ENCODE measurements at regions of chr10 and their contacts with region 1.

Region 1: DNA sequence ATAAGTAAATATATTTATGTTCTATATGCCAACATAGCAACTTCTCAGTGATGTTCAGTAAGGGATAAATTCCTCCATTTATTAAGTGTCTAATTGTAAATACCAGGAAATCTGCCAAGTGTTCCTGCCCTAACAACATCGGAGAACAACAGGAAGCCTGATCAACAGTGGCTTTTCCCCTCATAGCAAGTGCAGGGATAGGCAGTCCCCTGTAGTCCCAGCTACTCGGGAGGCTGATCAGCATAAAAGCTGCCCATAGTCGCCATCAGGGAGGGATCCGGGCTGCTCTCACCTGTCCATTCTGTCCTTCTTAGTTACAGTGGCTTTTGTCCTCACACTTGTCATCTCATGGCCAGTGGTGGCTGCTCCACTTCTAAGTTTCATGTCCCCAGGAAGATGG is 141.3 kb downstream of the IDE start:
- DNase-seq: no peak
- ATAC-seq: no peak
- H3K4me3 ChIP-seq: no peak overlapping the region
- H3K27ac ChIP-seq: no peak overlapping the region
- H3K4me1 ChIP-seq: peaks cover 6 to 9% of the 10 kb centered on the region in 2 experiments; a peak in 3 of 5 replicates
- H3K27me3 ChIP-seq: no peaks in the 10 kb centered on the region
- CTCF ChIP-seq: no peak
- EP300 ChIP-seq: no peak
- POLR2A ChIP-seq: no peak
- RAD21 ChIP-seq: no peak

Region 2: DNA sequence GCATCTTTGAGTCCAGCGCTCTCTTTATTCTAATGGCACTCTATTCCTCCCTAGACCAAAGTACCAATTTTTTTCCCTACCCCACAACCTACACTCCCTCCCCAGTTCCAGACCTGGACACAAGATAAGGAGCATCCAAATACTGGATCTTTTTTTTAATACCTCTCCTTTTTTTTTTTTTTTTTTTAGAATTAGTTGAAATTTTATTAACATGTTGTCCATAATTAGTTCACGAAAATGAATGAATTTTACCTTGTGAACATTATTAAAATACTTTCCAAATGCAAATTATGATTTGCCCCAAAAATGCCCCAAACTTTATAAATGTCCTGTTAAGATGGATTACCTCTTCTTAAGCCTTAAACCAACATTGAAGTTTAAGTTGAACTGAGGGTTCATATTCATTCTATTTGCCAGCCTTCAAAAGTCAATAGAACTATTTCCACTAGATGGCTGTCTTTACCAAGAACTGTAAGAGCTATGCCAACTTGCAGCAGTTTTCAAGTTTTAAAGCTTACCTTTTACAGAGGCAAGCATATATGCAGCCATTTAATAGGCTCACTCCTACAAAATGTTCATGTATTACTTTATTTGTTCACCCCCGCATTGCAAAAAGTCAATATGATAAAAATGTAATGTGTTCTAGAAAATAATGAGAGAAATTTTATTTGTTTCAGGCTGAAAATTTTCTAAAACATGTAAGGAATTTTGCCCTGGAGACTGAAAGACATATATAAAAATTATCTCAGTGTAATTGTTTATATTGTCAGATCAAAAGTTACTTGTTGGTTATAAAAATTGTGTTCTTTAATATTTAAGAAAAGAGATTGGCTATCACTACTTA is 674.1 kb before region 1 on chr10:
- CTCF ChIA-PET with region 1: interaction called, 3 read pairs
- POLR2A ChIA-PET with region 1: no interaction called
- in situ Hi-C with region 1: loop called (anchors 25 kb)
- intact Hi-C with region 1: loop called (anchors 2 kb)
- DNase-seq: peak in 2 of 4 experiments; percentile 11 to 38
- ATAC-seq: peak; percentile 70
- H3K4me3 ChIP-seq: no peak overlapping the region
- H3K27ac ChIP-seq: no peak overlapping the region
- H3K4me1 ChIP-seq: no peaks in the 10 kb centered on the region; a peak in 1 of 5 replicates
- H3K27me3 ChIP-seq: no peaks in the 10 kb centered on the region
- CTCF ChIP-seq: peak; percentile 33 to 70 (median 41); a peak in 4 of 6 replicates
- EP300 ChIP-seq: no peak
- POLR2A ChIP-seq: no peak
- RAD21 ChIP-seq: peak; percentile 78 to 86

Region 3: DNA sequence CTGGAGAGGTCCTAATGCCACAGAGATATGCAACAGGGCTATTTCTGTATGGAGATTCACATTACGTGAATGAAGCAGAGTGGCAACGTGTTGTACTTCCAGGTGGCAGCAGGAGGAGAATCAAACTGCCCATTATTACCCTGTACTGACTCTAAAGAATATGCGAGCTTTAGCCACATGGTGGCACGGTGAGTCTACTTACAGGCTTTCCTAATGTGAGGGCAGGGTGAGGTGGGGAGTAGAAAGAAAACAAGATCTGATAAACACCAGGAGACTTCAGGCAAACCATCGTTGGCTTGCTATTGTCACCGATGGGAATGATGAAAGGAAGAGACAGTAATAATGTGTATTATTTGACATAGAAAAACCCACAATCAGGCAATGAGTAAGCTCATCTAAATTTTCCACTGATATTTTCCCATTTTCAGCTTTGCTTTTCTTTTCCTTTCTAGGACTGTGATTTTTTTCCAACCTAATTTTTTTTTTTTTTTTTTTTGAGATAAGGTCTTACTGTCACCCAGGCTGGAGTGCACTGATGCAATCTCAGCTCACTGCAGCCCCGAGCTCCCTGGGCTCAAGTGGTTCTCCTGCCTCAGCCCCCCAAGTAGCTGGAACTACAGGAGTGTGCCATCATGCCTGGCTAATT is 344.7 kb before region 1 on chr10:
- CTCF ChIA-PET with region 1: interaction called, 12 read pairs
- POLR2A ChIA-PET with region 1: no interaction called
- in situ Hi-C with region 1: loop called (anchors 5 kb)
- intact Hi-C with region 1: loop called (anchors 1 kb)
- DNase-seq: peak; percentile 37 to 73 (median 52)
- ATAC-seq: peak; percentile 100
- H3K4me3 ChIP-seq: no peak overlapping the region
- H3K27ac ChIP-seq: no peak overlapping the region
- H3K4me1 ChIP-seq: no peaks in the 10 kb centered on the region; a peak in 1 of 5 replicates
- H3K27me3 ChIP-seq: no peaks in the 10 kb centered on the region
- CTCF ChIP-seq: peak; percentile 75 to 91 (median 87)
- EP300 ChIP-seq: no peak
- POLR2A ChIP-seq: no peak
- RAD21 ChIP-seq: peak; percentile 92 to 94

Region 4: GRCh38 chr10:92219516-92219915 is 213.1 kb before region 1 on chr10:
- CTCF ChIA-PET with region 1: no interaction called
- POLR2A ChIA-PET with region 1: no interaction called
- in situ Hi-C with region 1: no loop called
- intact Hi-C with region 1: loop called (anchors 10 kb)
- DNase-seq: no peak
- ATAC-seq: no peak
- H3K4me3 ChIP-seq: no peak overlapping the region
- H3K27ac ChIP-seq: no peak overlapping the region
- H3K4me1 ChIP-seq: no peaks in the 10 kb centered on the region
- H3K27me3 ChIP-seq: no peaks in the 10 kb centered on the region
- CTCF ChIP-seq: no peak
- EP300 ChIP-seq: no peak
- POLR2A ChIP-seq: no peak
- RAD21 ChIP-seq: no peak

Region 5: GRCh38 chr10:92290837-92291615 is 141.6 kb before region 1 on chr10 and contains the starts of genes CPEB3 and MARCHF5:
- CTCF ChIA-PET with region 1: no interaction called
- POLR2A ChIA-PET with region 1: no interaction called
- in situ Hi-C with region 1: no loop called
- intact Hi-C with region 1: loop called (anchors 5 kb)
- DNase-seq: peak; percentile 79 to 94 (median 85)
- ATAC-seq: peak; percentile 97
- H3K4me3 ChIP-seq: peak within 1 kb of the TSS; percentile 97
- H3K27ac ChIP-seq: peak within 1 kb of the TSS; percentile 89
- H3K4me1 ChIP-seq: peaks cover 5 to 9% of the 10 kb centered on the region in 2 experiments; a peak in 4 of 5 replicates
- H3K27me3 ChIP-seq: no peaks in the 10 kb centered on the region
- CTCF ChIP-seq: peak; percentile 53 to 76 (median 61); a peak in 5 of 6 replicates
- EP300 ChIP-seq: no peak
- POLR2A ChIP-seq: peak; percentile 72
- RAD21 ChIP-seq: peak; percentile 39 to 47; a peak in 3 of 4 replicates
- polyA plus RNA-seq, gene CPEB3: 0.15 to 0.17 TPM
- polyA plus RNA-seq, gene MARCHF5: 3.4 to 4.0 TPM

Region 6: DNA sequence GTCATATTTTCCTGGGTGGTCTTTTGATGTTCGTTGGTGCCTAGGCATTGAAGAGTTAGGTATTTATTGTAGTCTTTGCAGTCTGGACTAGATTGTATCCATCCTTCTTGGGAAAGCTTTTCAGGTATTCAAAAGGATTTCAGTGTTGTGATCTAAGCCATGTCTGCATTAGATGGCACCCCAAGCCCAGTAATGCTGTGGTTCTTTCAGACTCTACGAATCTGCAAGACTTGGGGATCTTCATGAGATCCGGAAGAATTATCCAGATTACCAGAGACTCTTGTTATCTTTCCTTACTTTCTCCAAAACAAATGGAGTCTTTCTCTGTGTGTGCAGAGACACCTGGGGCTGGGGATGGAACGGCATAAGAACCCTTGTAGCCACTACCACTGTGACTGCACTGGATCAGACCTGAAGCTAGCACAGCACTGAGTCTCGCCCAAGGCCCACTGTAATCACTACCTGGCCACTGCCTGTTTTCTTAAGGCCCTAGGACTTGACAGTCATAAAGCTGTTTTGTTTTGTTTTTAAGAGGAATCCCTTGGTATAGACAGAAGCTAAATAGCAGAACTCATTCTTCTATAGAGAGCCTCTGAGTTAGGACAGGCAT is 66.1 kb before region 1 on chr10:
- CTCF ChIA-PET with region 1: no interaction called
- POLR2A ChIA-PET with region 1: interaction called, 3 read pairs
- in situ Hi-C with region 1: no loop called
- intact Hi-C with region 1: loop called (anchors 5 kb)
- DNase-seq: no peak
- ATAC-seq: peak; percentile 40; the same call in 2 of the 3 replicates
- H3K4me3 ChIP-seq: no peak overlapping the region
- H3K27ac ChIP-seq: no peak overlapping the region
- H3K4me1 ChIP-seq: no peaks in the 10 kb centered on the region
- H3K27me3 ChIP-seq: no peaks in the 10 kb centered on the region; a peak in 1 of 5 replicates
- CTCF ChIP-seq: peak in 1 of 3 experiments; percentile 46; a peak in 2 of 6 replicates
- EP300 ChIP-seq: no peak
- POLR2A ChIP-seq: no peak
- RAD21 ChIP-seq: peak; percentile 62 to 64

Region 7: GRCh38 chr10:92942284-92942683 is 509.7 kb after region 1 on chr10:
- CTCF ChIA-PET with region 1: no interaction called
- POLR2A ChIA-PET with region 1: no interaction called
- in situ Hi-C with region 1: no loop called
- intact Hi-C with region 1: no loop called
- DNase-seq: no peak
- ATAC-seq: no peak
- H3K4me3 ChIP-seq: no peak overlapping the region
- H3K27ac ChIP-seq: no peak overlapping the region
- H3K4me1 ChIP-seq: no peaks in the 10 kb centered on the region
- H3K27me3 ChIP-seq: no peaks in the 10 kb centered on the region
- CTCF ChIP-seq: no peak
- EP300 ChIP-seq: no peak
- POLR2A ChIP-seq: no peak
- RAD21 ChIP-seq: no peak